ENCODE measurements at regions of chr9 and their contacts with region 1.

Region 1: DNA sequence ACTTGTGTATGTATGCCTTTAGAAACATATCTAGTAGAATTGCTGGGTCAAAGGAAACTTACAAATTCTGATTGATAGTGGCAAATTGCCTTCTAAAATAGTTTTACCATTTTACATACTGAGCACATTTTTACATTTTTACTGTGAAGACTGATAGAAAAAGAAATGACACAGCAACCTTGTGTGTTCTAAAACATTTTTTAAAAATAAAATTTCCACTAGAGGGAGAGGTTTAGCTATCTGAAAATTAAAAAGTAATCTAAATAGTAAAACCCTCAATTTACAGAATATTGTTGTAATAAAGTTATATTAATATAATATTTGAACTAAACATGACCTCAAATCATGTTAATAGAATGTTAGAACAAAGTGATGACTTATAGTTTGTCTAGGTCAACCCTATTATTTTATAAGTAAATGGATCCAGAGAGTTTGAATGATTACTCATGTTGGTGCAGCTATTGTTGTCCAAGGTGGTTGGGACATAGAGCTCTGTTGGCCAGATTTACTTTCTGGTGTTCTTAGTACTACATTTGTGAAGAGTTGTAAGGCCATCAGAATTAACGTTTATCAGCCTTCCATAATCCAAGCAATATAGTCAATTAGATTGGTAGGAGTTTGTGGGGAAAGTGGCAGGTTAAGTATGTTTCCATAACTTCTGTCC is 17.2 kb downstream of the CENPP start:
- DNase-seq: no peak
- ATAC-seq: no peak
- H3K4me3 ChIP-seq: no peak overlapping the region
- H3K27ac ChIP-seq: no peak overlapping the region
- H3K4me1 ChIP-seq: no peaks in the 10 kb centered on the region
- H3K27me3 ChIP-seq: no peaks in the 10 kb centered on the region
- CTCF ChIP-seq: peak in 1 of 2 donors; percentile 32

Region 2: GRCh38 chr9:92048924-92049625 is 293.9 kb before region 1 on chr9:
- intact Hi-C with region 1: no loop called
- DNase-seq: peak in 1 of 4 donors; percentile 11
- ATAC-seq: no peak
- H3K4me3 ChIP-seq: no peak overlapping the region
- H3K27ac ChIP-seq: no peak overlapping the region
- H3K4me1 ChIP-seq: no peaks in the 10 kb centered on the region
- H3K27me3 ChIP-seq: no peaks in the 10 kb centered on the region
- CTCF ChIP-seq: no peak

Region 3: GRCh38 chr9:92438900-92439526 is 96.1 kb after region 1 on chr9:
- intact Hi-C with region 1: loop called in 1 of 2 experiments (anchors 10 kb)
- DNase-seq: no peak
- ATAC-seq: no peak
- H3K4me3 ChIP-seq: no peak overlapping the region
- H3K27ac ChIP-seq: no peak overlapping the region
- H3K4me1 ChIP-seq: no peaks in the 10 kb centered on the region
- H3K27me3 ChIP-seq: no peaks in the 10 kb centered on the region
- CTCF ChIP-seq: peak in 1 of 2 donors; percentile 11

Region 4: GRCh38 chr9:92558612-92559374 is 215.8 kb after region 1 on chr9:
- intact Hi-C with region 1: no loop called
- DNase-seq: no peak
- ATAC-seq: no peak
- H3K4me3 ChIP-seq: no peak overlapping the region
- H3K27ac ChIP-seq: no peak overlapping the region
- H3K4me1 ChIP-seq: no peaks in the 10 kb centered on the region
- H3K27me3 ChIP-seq: no peaks in the 10 kb centered on the region
- CTCF ChIP-seq: no peak

Region 5: DNA sequence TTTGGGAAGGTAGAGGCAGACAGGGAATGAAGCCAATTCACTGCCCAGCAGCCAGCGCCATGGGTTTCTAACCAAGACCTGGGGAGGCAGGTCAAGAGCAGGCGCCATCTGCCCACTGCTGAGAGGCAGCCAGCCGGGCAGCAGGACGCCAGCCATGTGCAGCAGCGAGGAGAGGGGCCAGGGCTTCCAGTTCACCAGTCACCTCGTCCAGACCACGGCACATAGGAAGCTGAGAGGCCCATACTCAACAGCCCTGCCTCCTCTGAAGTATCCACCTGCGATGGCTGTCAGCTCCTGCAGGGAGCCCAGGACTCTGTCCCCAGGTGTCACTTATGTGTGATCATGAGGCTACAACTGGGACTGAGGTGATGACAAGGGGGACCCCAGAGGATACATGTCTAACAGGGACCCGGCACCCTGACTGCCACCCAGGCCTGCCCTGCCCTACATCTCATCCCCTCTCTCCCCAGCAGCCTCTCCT is 296.9 kb after region 1 on chr9:
- intact Hi-C with region 1: loop called in 1 of 2 experiments (anchors 5 kb)
- DNase-seq: peak in 1 of 4 donors; percentile 69
- ATAC-seq: no peak
- H3K4me3 ChIP-seq: no peak overlapping the region
- H3K27ac ChIP-seq: no peak overlapping the region
- H3K4me1 ChIP-seq: no peaks in the 10 kb centered on the region
- H3K27me3 ChIP-seq: no peaks in the 10 kb centered on the region
- CTCF ChIP-seq: no peak

Measured in left lung (tissue), 14 donors.